ENCODE measurements at regions of chr1 and their contacts with region 1.

Region 1: DNA sequence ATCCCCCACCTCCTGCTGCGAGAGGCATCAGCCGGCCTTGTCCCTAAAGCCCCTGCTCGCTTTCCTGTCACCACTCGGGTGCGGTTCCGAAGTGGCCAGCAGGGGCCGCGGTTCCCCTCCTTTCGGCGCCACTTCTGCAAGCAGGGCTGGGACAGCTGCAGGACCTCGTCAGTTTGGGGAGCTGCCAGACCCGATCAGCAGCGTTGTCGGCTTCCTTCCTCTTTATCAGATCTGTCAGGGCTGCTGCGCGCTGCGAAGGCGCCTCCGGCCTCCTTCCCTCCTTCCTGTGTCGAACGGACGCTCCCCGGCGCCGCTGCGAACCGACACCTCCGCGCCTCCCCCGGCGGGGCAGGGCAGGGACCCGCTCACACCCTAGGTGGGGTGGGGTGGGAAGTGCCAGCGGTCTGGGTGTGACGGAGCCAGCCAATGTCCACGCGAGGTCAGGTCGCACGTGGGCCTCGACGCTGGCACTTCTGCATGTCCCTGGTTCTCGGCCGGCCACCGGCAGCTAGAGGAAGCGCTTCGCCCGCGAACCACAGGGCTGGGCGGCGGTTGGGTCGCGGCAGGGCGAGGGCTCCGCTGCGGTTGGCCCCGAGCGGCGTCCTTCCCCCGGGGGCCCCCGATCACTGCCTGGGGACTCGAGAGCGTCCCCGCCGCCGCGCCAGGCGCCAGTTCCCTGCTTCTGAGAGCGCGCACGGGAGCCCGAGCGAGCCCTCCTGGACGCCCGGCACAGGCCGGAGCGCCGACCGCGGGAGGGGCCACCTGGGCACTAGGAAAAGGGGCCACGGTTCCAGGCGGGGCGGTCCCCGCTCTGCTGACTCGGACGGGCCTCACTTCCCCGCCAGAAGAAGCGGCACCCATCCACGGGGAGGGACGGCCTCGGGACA is 81.8 kb downstream of the RUNX3 start:
- DNase-seq: peak; percentile 91
- H3K4me3 Mint-ChIP-seq: peak overlapping the region; percentile 61
- H3K27ac Mint-ChIP-seq: peak overlapping the region; percentile 52
- H3K4me1 Mint-ChIP-seq: peaks cover 26% of the 10 kb centered on the region
- H3K27me3 Mint-ChIP-seq: peaks cover 26% of the 10 kb centered on the region

Region 2: DNA sequence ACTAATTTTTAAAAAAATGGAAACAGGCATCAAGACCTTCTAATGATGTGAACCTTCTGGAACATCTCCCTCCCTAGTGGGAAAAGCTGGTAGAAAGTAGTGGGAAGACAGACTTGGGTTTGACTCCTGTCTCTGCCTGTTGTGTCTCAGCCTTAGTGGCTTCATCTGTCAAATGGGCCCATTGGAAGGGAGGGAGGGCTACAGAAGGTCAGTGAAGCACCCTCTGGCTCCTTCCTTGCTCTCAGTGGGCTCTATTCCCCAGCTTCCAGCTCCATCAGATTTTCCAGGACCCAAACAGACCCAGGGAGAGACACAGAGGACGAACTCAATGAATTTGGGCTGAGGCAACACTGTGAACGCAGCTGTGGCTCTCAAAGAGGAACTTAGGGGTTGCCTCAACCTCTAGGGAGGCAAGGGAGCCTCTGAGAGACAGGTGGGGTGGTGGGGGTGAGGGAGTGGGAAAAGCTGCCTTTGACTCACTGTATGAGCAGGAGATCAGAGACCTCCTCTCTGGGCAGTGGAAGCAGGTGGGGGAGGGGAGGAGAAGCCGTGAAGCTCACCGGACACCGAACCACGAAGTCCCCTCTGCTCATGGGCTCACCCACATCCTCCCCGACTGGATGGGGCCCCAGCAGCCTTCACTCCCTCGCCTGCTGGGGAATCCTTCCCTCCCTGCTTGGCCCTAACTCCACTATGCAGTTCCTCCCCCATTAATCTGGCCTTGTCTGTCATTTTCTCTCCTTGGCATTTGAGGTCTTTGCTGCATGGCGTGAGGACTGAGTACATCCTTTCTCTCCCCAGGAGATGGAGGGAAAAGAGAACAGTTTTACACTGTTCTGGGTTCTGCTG is 939.5 kb before region 1 on chr1:
- CTCF ChIA-PET with region 1: no interaction called
- POLR2A ChIA-PET with region 1: no interaction called
- DNase-seq: peak; percentile 33
- H3K4me3 Mint-ChIP-seq: no peak overlapping the region
- H3K27ac Mint-ChIP-seq: no peak overlapping the region
- H3K4me1 Mint-ChIP-seq: peaks cover 56% of the 10 kb centered on the region
- H3K27me3 Mint-ChIP-seq: peaks cover 18% of the 10 kb centered on the region

Region 3: DNA sequence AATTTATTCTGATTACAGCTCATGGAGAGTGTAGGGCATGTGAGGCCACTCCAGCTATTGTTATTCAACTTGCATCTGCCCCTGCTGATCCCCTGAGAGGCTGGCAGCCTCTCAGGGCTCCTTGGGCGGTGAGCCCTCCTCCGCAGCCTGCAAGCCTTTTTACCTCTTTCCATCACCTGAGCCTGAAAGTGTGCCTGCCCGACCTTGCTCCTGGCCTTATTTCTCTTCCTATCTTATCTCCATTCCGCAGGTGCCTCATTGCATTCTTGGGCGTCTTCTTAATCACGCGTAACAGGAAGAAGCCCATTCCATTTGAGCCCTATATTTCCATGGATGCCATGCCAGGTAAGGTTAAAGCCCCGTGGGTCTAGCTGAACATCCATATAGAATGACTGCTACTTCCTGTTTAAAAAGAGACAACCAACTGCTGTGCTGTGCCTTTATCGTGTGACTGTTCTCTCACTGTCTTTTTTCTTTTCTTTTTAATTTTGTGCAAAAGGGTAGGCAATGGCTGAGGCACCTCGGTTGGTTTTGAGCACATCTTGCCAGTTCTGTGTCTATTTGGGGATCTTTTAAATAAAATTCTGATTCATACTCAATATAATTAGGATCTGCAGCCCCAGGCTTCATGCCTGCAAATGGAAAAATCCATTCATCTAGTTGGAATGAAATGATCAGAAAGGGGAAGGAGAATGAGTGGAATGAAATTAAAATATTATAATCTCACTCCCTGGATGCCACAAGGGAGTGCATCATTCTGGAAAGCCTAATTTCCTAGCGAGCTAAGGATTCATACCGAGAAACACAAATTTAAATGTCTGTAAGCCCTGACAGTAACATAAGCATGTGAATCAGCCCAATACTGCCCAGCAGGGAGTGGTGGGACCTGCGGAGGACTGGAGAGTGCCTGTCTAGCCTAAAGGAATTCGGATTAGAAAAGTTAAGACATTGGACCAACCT is 384.2 kb before region 1 on chr1:
- CTCF ChIA-PET with region 1: no interaction called
- POLR2A ChIA-PET with region 1: no interaction called
- DNase-seq: no peak
- H3K4me3 Mint-ChIP-seq: no peak overlapping the region
- H3K27ac Mint-ChIP-seq: peak overlapping the region; percentile 19
- H3K4me1 Mint-ChIP-seq: no peaks in the 10 kb centered on the region
- H3K27me3 Mint-ChIP-seq: no peaks in the 10 kb centered on the region

Region 4: DNA sequence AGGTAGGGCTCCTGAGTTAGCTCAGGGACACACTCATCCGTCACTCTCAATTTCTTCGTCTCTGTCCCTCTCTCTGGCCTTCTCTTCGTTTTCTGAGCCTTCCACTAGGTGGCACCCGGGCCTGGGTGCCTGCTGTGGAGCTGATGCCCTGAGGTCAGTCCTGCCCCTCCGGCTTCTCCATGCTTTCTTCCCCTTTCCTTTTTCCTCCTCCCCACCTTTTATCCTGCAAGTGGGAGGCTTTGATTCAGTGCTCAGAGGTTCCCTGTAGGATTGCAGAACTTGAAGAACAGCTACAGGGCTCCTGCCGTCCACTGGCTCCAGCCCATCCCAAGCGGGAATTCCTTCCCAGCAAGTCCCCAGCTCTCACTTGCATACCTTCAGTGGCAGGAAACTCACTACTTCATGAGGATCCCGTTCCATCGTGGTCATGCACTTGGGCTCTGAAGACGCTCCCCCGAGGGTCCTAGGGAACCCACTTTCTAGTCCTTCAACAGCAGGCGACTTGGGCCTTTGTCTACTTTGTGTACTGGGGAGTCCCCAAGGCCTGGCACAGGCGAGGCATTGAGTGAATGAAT is 159.5 kb before region 1 on chr1:
- CTCF ChIA-PET with region 1: interaction called, 11 read pairs
- POLR2A ChIA-PET with region 1: no interaction called
- DNase-seq: peak; percentile 65
- H3K4me3 Mint-ChIP-seq: no peak overlapping the region
- H3K27ac Mint-ChIP-seq: no peak overlapping the region
- H3K4me1 Mint-ChIP-seq: peaks cover 9% of the 10 kb centered on the region
- H3K27me3 Mint-ChIP-seq: peaks cover 1% of the 10 kb centered on the region

Region 5: DNA sequence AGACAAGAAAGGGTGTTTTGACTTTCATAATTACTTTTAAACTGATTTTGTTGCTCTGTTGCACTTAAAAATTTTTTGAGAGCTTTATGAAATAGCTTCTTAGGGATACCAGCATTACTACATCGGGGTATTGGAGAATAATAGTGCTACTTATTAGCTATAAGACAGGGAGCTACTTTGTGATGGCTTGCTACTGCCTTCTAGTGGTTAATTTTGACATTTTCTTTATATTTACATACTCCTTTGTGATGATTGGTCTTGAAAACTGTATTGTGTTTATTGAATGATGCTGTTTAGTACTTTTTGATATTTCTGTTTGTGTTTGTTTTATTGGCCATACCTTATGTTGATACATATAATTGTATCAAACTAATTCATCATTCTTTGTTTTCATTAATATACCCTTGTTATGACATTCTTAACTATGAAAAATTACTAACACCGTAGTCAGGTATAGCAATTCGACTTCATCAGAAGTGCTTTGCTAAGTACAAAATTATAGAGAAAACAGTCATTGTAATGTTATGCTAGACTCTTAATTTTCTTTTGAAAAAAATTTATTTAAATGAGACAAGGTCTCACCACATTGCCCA is 17.5 kb before region 1 on chr1:
- CTCF ChIA-PET with region 1: interaction called, 22 read pairs
- POLR2A ChIA-PET with region 1: no interaction called
- DNase-seq: no peak
- H3K4me3 Mint-ChIP-seq: no peak overlapping the region
- H3K27ac Mint-ChIP-seq: no peak overlapping the region
- H3K4me1 Mint-ChIP-seq: peaks cover 1% of the 10 kb centered on the region
- H3K27me3 Mint-ChIP-seq: no peaks in the 10 kb centered on the region

Region 6: DNA sequence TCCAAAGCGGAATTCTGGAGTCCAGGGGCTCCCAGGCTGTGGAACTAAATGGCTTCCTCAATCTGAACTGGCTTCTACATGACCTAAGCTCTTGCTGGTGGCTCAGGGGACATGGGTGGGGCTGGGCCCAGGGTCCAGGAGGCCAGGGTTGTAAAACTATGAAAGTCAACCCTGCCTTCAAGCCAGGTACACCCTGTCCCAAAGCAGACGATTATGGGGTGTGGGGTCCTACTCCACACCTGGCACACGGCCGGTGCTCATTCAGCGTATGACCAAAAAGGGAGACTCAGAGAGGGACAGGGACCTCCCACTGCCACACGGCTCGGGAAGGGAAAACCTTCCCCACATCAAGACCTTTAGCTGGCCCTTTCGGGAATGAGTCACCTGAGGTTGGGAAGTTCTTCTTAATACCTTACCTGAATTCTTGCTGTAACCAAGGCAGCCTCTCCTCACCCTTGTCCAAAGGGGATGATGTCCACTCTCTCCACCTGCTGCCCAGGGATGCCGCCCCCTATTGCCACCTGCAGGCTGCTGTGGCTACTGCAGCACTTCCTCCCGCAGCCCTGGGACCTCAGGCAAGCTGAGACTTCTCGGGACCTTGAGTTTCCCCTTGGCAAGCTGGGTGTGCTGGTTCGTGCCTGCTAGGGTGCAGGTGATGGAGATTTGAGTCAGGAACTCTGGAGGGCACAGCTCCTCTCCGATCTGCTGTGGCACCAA is 49.7 kb after region 1 on chr1:
- CTCF ChIA-PET with region 1: interaction called, 36 read pairs
- POLR2A ChIA-PET with region 1: interaction called, 5 read pairs
- DNase-seq: peak; percentile 58
- H3K4me3 Mint-ChIP-seq: no peak overlapping the region
- H3K27ac Mint-ChIP-seq: peak overlapping the region; percentile 61
- H3K4me1 Mint-ChIP-seq: peaks cover 13% of the 10 kb centered on the region
- H3K27me3 Mint-ChIP-seq: no peaks in the 10 kb centered on the region

Region 7: DNA sequence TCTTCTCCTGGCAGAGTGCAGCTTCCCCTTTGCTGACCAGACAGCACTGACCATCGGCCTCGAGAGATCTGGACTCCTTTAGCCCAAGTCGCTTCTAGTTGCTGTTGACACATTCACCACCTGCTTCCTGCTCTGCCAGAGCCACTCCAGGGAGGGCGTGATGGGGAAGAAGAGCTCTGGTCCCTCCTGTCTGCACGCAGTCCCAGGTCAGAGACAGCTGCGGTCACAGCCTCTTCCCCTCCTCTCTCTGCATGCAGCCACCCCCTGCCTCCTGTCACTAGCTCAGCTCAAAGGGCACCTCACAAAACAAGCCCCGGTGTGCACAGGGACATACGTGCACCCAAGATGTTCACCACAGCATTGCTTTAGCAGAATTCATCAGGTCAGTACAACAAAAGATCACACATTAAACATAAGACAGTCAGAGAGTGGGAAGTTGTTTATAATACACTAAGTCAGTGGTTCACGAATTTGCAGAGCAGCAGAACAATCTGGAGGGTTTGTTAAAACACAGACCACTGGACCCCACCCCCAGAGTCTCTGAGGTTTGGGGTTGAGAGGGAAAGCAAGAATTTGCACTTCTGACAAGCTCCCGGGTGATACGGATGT is 251.2 kb after region 1 on chr1:
- CTCF ChIA-PET with region 1: interaction called, 19 read pairs
- POLR2A ChIA-PET with region 1: interaction called, 10 read pairs
- DNase-seq: peak; percentile 54
- H3K4me3 Mint-ChIP-seq: no peak overlapping the region
- H3K27ac Mint-ChIP-seq: peak overlapping the region; percentile 71
- H3K4me1 Mint-ChIP-seq: peaks cover 73% of the 10 kb centered on the region
- H3K27me3 Mint-ChIP-seq: peaks cover 24% of the 10 kb centered on the region

Region 8: DNA sequence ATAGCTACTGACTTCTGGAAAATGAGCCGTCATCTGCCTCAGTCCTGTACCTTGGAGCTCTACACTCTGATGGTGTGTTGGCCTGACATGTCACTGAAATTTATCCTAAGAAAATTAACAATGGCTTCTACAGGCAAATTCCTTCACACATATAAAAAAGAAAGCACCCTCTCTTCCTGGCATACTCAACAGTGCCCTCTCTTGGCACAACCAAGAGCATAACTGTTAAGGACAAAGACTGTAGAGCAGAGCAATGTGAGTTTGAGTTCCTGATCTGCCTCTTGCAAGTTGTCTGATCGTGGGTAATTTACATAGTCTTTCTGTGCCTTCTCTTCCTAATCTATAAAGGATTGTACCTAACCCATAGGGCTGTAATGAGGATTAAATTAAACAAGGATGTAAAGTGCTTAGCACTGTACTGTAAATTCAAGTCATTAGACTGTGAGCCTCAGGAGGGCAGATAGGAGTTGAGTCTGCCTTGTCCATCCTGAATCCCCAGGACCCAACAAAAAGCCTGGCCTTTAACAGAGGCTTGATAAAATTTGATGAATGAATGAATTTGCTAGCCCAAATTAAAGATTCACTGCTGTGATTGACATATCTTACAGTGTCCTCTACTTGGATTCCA is 300.5 kb after region 1 on chr1:
- CTCF ChIA-PET with region 1: interaction called, 20 read pairs
- POLR2A ChIA-PET with region 1: no interaction called
- DNase-seq: peak; percentile 26
- H3K4me3 Mint-ChIP-seq: no peak overlapping the region
- H3K27ac Mint-ChIP-seq: no peak overlapping the region
- H3K4me1 Mint-ChIP-seq: peaks cover 4% of the 10 kb centered on the region
- H3K27me3 Mint-ChIP-seq: peaks cover 47% of the 10 kb centered on the region

Region 9: DNA sequence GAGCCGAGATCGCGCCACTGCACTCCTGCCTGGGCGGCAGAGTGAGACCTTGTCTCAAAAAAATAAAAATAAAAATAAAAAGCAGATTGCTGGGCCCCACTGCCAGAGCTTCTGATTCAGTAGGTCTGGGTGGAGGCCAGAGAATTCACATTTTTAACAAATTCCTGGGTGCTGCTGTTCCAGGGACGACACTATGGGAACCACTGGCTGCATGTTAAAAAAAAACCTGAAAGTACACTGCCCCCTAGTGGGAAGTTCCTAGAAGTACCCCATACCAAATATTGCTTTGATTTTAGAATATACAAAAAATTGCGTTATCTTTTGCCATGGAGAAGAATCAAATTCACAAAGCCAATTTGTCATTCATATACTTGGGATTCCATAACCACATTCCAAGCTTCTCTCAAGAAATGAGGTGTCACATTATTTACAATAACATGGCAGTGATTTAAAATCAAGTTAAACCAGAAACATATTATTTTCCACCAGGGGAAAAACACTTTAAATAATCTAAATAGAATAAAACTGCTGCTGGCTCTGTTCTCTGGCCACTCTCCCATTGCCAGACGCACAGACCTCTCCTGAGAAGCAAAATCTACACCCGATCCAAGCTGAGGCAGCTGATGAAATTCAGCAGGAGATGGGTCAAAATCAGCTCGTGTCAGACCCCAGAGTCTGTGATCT is 356.7 kb after region 1 on chr1:
- CTCF ChIA-PET with region 1: interaction called, 32 read pairs
- POLR2A ChIA-PET with region 1: no interaction called
- DNase-seq: no peak
- H3K4me3 Mint-ChIP-seq: no peak overlapping the region
- H3K27ac Mint-ChIP-seq: no peak overlapping the region
- H3K4me1 Mint-ChIP-seq: no peaks in the 10 kb centered on the region
- H3K27me3 Mint-ChIP-seq: peaks cover 16% of the 10 kb centered on the region